ENCODE measurements at regions of chr3 and their contacts with region 1.

Region 1: GRCh38 chr3:10224784-10225665 is 23.2 kb upstream of the TATDN2 start:
- DNase-seq: peak; percentile 68 to 75 (median 70)
- ATAC-seq: peak; percentile 58 to 94 (median 91)
- H3K4me3 ChIP-seq: no peak overlapping the region
- H3K27ac ChIP-seq: peak overlapping the region in 1 of 12 donors; percentile 18
- H3K4me1 ChIP-seq: peaks cover 0 to 56% (median 4%) of the 10 kb centered on the region in 12 donors
- H3K27me3 ChIP-seq: no peaks in the 10 kb centered on the region
- CTCF ChIP-seq: peak; percentile 69 to 88 (median 84)
- POLR2A ChIP-seq: no peak

Region 2: GRCh38 chr3:9932843-9933560 is 292.0 kb before region 1 on chr3:
- intact Hi-C with region 1: loop called in 4 of 10 experiments (anchors 2 to 10 kb)
- DNase-seq: peak; percentile 80 to 91 (median 85)
- ATAC-seq: peak; percentile 41 to 86 (median 78)
- H3K4me3 ChIP-seq: peak overlapping the region; percentile 35 to 92 (median 74)
- H3K27ac ChIP-seq: peak overlapping the region; percentile 74 to 98 (median 93)
- H3K4me1 ChIP-seq: peaks cover 7 to 40% (median 23%) of the 10 kb centered on the region in 12 donors
- H3K27me3 ChIP-seq: no peaks in the 10 kb centered on the region
- CTCF ChIP-seq: peak; percentile 48 to 84 (median 66)
- POLR2A ChIP-seq: peak in 1 of 2 donors; percentile 5